PC-9 (cell line): ENCODE measurements at regions of chr4 and their contacts with region 1.

Region 1: DNA sequence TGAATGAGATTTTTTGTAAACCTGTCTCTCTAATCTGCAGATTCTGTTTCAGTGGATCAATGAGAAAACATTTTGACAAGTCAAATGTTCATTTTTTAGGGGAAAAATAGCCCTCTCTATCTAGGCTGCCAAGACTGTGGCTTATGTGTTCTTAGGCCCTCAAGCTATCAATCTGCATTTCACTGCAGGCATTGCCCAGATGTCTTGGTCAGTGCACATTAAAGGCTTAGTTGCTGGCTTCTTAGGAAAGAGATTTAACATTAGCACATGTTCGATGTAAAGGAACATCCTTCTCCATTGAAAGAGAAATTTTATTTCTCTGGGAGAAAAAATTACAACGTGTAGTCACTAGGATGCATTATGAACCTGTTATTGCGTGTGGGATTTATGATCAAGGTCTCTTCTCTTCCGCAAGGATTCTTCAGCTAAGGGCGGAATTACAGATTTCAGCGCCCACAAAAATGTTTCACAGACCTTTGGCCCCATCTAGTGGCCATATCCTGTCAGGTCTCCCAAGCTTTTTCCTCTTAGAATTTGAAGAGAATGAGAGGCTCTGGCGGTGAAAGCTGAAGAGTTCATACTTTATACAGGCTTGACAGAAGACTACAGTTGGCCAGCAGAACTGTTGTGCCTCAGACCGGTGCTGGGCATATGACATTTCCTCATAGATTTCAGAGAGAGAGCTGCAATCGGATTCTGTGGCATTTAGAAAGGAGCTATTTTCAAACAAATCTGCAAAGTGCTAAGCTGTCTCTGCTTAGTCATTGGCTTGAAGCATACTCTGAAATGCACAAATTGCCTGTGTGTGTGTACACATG is 144.6 kb upstream of the NOCT start:
- DNase-seq: peak; percentile 62 to 65
- H3K4me3 ChIP-seq: no peak overlapping the region
- H3K27ac ChIP-seq: no peak overlapping the region
- H3K4me1 ChIP-seq: no peaks in the 10 kb centered on the region
- H3K27me3 ChIP-seq: no peaks in the 10 kb centered on the region
- CTCF ChIP-seq: peak; percentile 81

Region 2: GRCh38 chr4:137819964-137820383 is 1051.0 kb before region 1 on chr4:
- CTCF ChIA-PET with region 1: no interaction called
- POLR2A ChIA-PET with region 1: no interaction called
- intact Hi-C with region 1: loop called (anchors 1 kb)
- DNase-seq: peak; percentile 12 to 37
- H3K4me3 ChIP-seq: no peak overlapping the region
- H3K27ac ChIP-seq: no peak overlapping the region
- H3K4me1 ChIP-seq: no peaks in the 10 kb centered on the region
- H3K27me3 ChIP-seq: no peaks in the 10 kb centered on the region
- CTCF ChIP-seq: peak; percentile 69

Region 3: GRCh38 chr4:138348055-138348454 is 522.9 kb before region 1 on chr4:
- CTCF ChIA-PET with region 1: no interaction called
- POLR2A ChIA-PET with region 1: no interaction called
- intact Hi-C with region 1: no loop called
- DNase-seq: no peak
- H3K4me3 ChIP-seq: no peak overlapping the region
- H3K27ac ChIP-seq: no peak overlapping the region
- H3K4me1 ChIP-seq: 0 out of 2 replicates have a peak, but pooled peaks cover 11% of the 10 kb centered on the region
- H3K27me3 ChIP-seq: no peaks in the 10 kb centered on the region
- CTCF ChIP-seq: no peak

Region 4: DNA sequence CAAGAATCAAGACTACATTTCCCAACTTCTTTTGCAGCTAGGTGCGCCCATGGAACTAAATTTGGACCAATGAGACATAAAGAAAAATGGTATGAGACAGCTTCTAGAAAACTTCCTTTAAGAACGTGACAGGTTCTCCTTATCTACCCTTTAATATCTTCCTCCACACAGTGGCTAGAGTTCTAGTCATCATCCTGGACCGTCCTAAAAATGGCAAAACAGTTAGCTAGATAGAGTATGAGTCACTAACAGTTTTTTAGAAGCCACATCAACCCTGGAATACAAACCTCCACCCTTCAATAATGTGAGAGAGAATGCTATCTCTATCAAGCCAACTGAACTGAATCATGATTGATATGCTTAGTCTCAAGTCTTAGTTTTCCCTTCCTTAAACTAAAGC is 360.9 kb before region 1 on chr4:
- CTCF ChIA-PET with region 1: no interaction called
- POLR2A ChIA-PET with region 1: interaction called, 31 read pairs
- intact Hi-C with region 1: no loop called
- DNase-seq: no peak
- H3K4me3 ChIP-seq: no peak overlapping the region
- H3K27ac ChIP-seq: no peak overlapping the region
- H3K4me1 ChIP-seq: no peaks in the 10 kb centered on the region
- H3K27me3 ChIP-seq: no peaks in the 10 kb centered on the region
- CTCF ChIP-seq: no peak

Region 5: GRCh38 chr4:138845054-138845453 is 25.9 kb before region 1 on chr4:
- CTCF ChIA-PET with region 1: interaction called, 26 read pairs
- POLR2A ChIA-PET with region 1: no interaction called
- intact Hi-C with region 1: no loop called
- DNase-seq: no peak
- H3K4me3 ChIP-seq: no peak overlapping the region
- H3K27ac ChIP-seq: no peak overlapping the region
- H3K4me1 ChIP-seq: no peaks in the 10 kb centered on the region
- H3K27me3 ChIP-seq: no peaks in the 10 kb centered on the region
- CTCF ChIP-seq: no peak

Region 6: GRCh38 chr4:138919094-138919936 is 48.4 kb after region 1 on chr4:
- CTCF ChIA-PET with region 1: no interaction called
- POLR2A ChIA-PET with region 1: no interaction called
- intact Hi-C with region 1: loop called (anchors 1 kb)
- DNase-seq: peak; percentile 44 to 77
- H3K4me3 ChIP-seq: no peak overlapping the region
- H3K27ac ChIP-seq: no peak overlapping the region
- H3K4me1 ChIP-seq: no peaks in the 10 kb centered on the region
- H3K27me3 ChIP-seq: no peaks in the 10 kb centered on the region
- CTCF ChIP-seq: peak; percentile 69

Region 7: GRCh38 chr4:139794158-139794954 is 923.4 kb after region 1 on chr4:
- CTCF ChIA-PET with region 1: interaction called, 10 read pairs
- POLR2A ChIA-PET with region 1: no interaction called
- intact Hi-C with region 1: no loop called
- DNase-seq: no peak
- H3K4me3 ChIP-seq: no peak overlapping the region
- H3K27ac ChIP-seq: no peak overlapping the region
- H3K4me1 ChIP-seq: no peaks in the 10 kb centered on the region
- H3K27me3 ChIP-seq: no peaks in the 10 kb centered on the region
- CTCF ChIP-seq: no peak